ENCODE measurements at regions of chr16 and their contacts with region 1.

Region 1: DNA sequence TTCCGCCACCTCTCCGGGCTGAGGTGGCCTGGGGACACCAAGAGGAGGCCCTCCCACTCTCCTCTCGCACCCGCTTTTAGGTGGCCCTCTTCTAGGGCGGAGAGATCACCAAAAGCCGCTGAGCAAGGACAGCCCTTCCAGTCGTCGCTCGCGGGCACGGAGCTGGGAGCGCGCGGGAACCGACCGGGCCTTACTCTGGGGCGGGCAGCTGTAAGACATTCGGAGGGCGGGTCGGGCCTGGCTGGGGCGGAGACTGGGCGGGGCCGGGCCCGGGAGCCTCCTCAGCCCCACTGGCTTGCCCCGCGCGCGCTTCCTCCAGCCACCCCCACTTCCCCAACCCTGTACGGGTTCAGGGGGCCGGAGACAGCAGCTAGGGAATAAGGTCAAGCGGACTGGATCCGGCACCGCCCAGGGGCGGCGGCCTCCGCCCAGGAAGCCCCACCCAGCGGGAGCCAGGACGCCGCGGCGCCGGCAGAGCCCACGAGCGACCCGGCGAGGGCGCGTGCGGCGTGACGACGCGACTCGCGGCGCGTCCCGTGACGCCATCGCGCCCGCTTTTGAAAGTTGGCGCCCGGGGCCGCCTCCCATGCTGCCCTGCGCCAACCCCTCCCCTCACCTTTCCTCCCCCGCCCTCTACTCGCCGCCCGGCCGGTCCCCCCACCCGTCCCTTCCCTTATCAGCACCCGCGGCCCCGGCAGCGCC is 351 bp upstream of the CTCF start:
- DNase-seq: peak; percentile 99
- H3K4me3 Mint-ChIP-seq: peak overlapping the region; percentile 83
- H3K27ac Mint-ChIP-seq: peak overlapping the region; percentile 90
- H3K4me1 Mint-ChIP-seq: peaks cover 32% of the 10 kb centered on the region
- H3K27me3 Mint-ChIP-seq: no peaks in the 10 kb centered on the region

Region 2: GRCh38 chr16:67546761-67547422 is 15.1 kb before region 1 on chr16:
- intact Hi-C with region 1: loop called (anchors 1 kb)
- DNase-seq: peak; percentile 62
- H3K4me3 Mint-ChIP-seq: peak overlapping the region; percentile 13
- H3K27ac Mint-ChIP-seq: peak overlapping the region; percentile 81
- H3K4me1 Mint-ChIP-seq: peaks cover 28% of the 10 kb centered on the region
- H3K27me3 Mint-ChIP-seq: no peaks in the 10 kb centered on the region

Region 3: GRCh38 chr16:67613808-67614207 is 51.8 kb after region 1 on chr16:
- intact Hi-C with region 1: no loop called
- DNase-seq: no peak
- H3K4me3 Mint-ChIP-seq: no peak overlapping the region
- H3K27ac Mint-ChIP-seq: no peak overlapping the region
- H3K4me1 Mint-ChIP-seq: no peaks in the 10 kb centered on the region
- H3K27me3 Mint-ChIP-seq: no peaks in the 10 kb centered on the region

Region 4: DNA sequence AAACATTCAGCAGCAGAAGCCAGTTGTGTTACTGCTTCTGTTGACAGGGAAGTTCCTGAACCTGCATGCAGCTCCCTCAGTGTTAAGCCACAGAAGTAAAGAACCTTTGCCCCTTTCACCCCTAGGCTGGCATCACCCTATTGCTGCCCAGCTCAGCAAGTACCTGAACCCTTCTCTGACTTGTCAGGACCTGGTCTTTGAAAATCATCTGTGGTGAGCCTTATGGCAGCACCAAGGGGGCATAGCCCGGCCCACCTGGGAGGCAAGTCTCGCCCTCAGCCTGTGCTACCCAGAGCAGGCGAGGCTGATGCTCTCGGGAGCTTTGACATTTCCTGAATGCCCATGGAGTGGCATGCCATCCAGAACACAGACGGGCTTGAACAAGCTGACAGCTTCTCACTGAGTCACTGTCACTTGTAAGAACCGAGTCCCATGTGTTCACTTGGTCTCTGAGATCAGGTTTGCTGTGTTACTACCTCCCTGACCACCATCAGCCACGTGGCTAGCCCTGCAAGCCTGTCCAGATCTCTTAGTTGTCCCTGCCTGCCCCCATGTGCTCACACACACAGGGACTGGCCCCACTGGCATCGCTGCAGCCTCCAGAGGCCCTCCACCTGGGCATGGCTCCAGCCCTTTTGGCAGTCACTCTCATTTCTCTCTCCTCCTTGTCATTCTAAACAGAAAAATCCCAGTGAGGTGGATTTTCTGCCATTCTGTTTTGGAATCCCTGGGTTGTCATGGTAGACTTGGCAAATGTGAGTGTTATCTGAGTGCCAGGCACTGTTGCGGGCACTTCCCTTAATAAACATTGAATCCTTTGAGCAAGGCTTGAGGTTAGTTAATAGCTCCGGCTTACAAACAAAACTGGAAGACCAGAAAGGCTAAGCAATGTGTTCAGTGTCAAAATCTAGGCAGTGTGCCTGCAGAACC is 80.1 kb after region 1 on chr16:
- intact Hi-C with region 1: loop called (anchors 2 kb)
- DNase-seq: no peak
- H3K4me3 Mint-ChIP-seq: no peak overlapping the region
- H3K27ac Mint-ChIP-seq: no peak overlapping the region
- H3K4me1 Mint-ChIP-seq: peaks cover 6% of the 10 kb centered on the region
- H3K27me3 Mint-ChIP-seq: no peaks in the 10 kb centered on the region

Region 5: GRCh38 chr16:67841764-67842508 is 280.0 kb after region 1 on chr16 and contains the start of gene THAP11:
- intact Hi-C with region 1: loop called (anchors 2 kb)
- DNase-seq: peak; percentile 92
- H3K4me3 Mint-ChIP-seq: peak within 1 kb of the TSS; percentile 89
- H3K27ac Mint-ChIP-seq: peak within 1 kb of the TSS; percentile 94
- H3K4me1 Mint-ChIP-seq: peaks cover 29% of the 10 kb centered on the region
- H3K27me3 Mint-ChIP-seq: no peaks in the 10 kb centered on the region
- total RNA-seq, gene THAP11: 43.0 and 45.1 TPM in 2 replicates